B cell (primary cell): ENCODE measurements at regions of chr5 and their contacts with region 1.

Region 1: GRCh38 chr5:134904630-134905245 is at the start of gene PCBD2:
- DNase-seq: peak; percentile 95
- ATAC-seq: peak; percentile 75
- H3K4me3 ChIP-seq: peak within 1 kb of the TSS; percentile 70 to 88 (median 82)
- H3K4me3 Mint-ChIP-seq: peak within 1 kb of the TSS; percentile 91
- H3K27ac ChIP-seq: peak within 1 kb of the TSS; percentile 80 to 96
- H3K27ac Mint-ChIP-seq: peak within 1 kb of the TSS; percentile 99
- H3K4me1 ChIP-seq: peaks cover 32 to 42% of the 10 kb centered on the region in 2 donors
- H3K4me1 Mint-ChIP-seq: peaks cover 35% of the 10 kb centered on the region
- H3K27me3 ChIP-seq: no peaks in the 10 kb centered on the region
- H3K27me3 Mint-ChIP-seq: no peaks in the 10 kb centered on the region
- CTCF ChIP-seq: peak; percentile 90
- total RNA-seq, gene PCBD2: 15.7 and 20.9 TPM in 2 replicates

Region 2: DNA sequence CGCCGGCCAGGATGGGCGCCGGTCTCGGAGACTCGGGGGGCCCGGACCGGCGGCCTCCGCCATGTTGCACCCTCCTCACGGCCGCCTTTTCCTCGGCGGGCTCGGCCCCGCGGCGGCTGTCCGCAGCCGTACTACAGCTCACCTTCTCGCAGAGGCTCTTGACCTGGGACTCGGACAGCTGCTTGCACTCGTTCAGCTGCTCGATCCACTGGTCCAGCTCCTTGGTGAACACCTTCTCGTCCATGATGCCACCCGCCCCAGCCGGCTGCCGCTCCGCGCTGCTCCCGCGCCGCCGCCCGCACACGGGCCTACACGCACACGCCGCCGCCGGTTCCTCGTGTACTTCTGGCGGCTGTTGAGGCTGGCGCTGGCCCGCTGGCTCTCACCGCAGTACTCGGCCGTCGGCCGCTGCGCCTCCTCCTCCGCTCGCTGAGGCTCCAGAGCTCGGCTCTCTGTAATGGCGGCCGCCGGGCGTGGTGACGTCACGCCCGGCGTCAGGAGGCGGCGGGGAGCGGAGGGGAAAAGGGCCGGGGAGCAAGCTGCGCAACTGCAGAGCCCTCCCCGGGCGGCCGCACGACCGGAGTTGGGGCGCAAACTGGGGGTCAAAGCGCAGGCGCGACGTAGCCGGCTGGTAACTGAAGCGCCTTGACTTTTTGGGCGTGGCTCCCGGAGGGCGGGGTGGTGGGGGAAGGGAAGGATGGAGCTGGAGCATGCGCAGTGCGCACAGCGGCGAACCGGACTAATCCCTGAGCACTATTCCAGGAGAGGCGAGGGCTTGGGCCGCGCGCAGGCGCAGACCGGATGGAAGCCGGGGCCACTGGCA is 678.9 kb before region 1 on chr5 and contains the start of gene PPP2CA:
- CTCF ChIA-PET with region 1: interaction called, 3 read pairs
- POLR2A ChIA-PET with region 1: interaction called, 8 read pairs
- intact Hi-C with region 1: loop called (anchors 1 kb)
- DNase-seq: peak; percentile 100
- ATAC-seq: peak; percentile 77
- H3K4me3 ChIP-seq: peak within 1 kb of the TSS; percentile 87 to 100 (median 98)
- H3K4me3 Mint-ChIP-seq: peak within 1 kb of the TSS; percentile 94
- H3K27ac ChIP-seq: peak within 1 kb of the TSS; percentile 95 to 100
- H3K27ac Mint-ChIP-seq: peak within 1 kb of the TSS; percentile 99
- H3K4me1 ChIP-seq: peaks cover 36% of the 10 kb centered on the region in 2 donors
- H3K4me1 Mint-ChIP-seq: peaks cover 51% of the 10 kb centered on the region
- H3K27me3 ChIP-seq: no peaks in the 10 kb centered on the region
- H3K27me3 Mint-ChIP-seq: no peaks in the 10 kb centered on the region
- CTCF ChIP-seq: peak; percentile 27
- total RNA-seq, gene PPP2CA: 86.2 and 100 TPM in 2 replicates

Region 3: DNA sequence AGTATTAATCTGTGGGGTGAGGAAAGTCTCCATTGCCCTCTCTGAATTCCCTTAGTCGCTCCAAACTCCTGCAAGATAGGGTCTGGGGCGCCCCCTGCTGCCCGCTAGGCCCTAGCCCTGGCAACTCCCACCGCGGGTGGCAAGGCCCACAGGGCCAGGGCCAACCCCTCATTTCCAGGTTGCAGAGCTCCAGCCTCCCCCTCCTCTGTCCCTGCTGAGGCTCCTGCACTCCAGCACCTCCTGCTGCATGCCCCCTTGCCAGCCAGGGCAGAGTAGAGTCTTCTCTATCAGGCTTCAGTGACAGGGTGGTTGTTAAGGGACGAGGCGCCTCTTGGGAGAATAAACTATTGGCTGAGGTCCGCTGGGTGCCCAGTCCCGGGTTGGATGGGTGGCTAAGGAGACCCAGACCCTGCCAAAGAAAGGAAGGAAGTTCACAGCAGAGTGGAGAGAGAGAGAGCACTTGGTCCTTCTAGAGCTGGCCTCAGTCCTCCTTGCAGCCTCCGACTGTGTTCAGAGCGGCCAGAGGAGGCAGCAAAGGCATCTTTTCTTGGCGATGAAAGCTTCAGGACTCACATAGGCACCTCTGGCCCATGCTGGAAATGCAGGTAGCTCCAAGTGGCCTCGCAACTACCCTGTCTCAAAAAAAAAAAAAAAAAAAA is 317.7 kb before region 1 on chr5:
- CTCF ChIA-PET with region 1: interaction called, 3 read pairs
- POLR2A ChIA-PET with region 1: no interaction called
- intact Hi-C with region 1: loop called (anchors 1 kb)
- DNase-seq: peak; percentile 82
- ATAC-seq: peak; percentile 89
- H3K4me3 ChIP-seq: peak overlapping the region in 1 of 5 experiments; percentile 33
- H3K4me3 Mint-ChIP-seq: peak overlapping the region; percentile 49
- H3K27ac ChIP-seq: no peak overlapping the region
- H3K27ac Mint-ChIP-seq: no peak overlapping the region
- H3K4me1 ChIP-seq: peaks cover 3 to 5% of the 10 kb centered on the region in 2 donors
- H3K4me1 Mint-ChIP-seq: peaks cover 21% of the 10 kb centered on the region
- H3K27me3 ChIP-seq: no peaks in the 10 kb centered on the region
- H3K27me3 Mint-ChIP-seq: no peaks in the 10 kb centered on the region
- CTCF ChIP-seq: peak; percentile 86

Region 4: GRCh38 chr5:134738133-134738962 is 166.4 kb before region 1 on chr5 and contains the start of gene CAMLG:
- CTCF ChIA-PET with region 1: interaction called, 93 read pairs
- POLR2A ChIA-PET with region 1: interaction called, 30 read pairs
- intact Hi-C with region 1: loop called (anchors 1 kb)
- DNase-seq: peak; percentile 98
- ATAC-seq: peak; percentile 97
- H3K4me3 ChIP-seq: peak within 1 kb of the TSS; percentile 69 to 94 (median 89)
- H3K4me3 Mint-ChIP-seq: peak within 1 kb of the TSS; percentile 90
- H3K27ac ChIP-seq: peak within 1 kb of the TSS; percentile 77 to 89
- H3K27ac Mint-ChIP-seq: peak within 1 kb of the TSS; percentile 89
- H3K4me1 ChIP-seq: peaks cover 24 to 42% of the 10 kb centered on the region in 2 donors
- H3K4me1 Mint-ChIP-seq: peaks cover 33% of the 10 kb centered on the region
- H3K27me3 ChIP-seq: no peaks in the 10 kb centered on the region
- H3K27me3 Mint-ChIP-seq: no peaks in the 10 kb centered on the region
- CTCF ChIP-seq: peak; percentile 77
- total RNA-seq, gene CAMLG: 27.5 and 29.7 TPM in 2 replicates

Region 5: DNA sequence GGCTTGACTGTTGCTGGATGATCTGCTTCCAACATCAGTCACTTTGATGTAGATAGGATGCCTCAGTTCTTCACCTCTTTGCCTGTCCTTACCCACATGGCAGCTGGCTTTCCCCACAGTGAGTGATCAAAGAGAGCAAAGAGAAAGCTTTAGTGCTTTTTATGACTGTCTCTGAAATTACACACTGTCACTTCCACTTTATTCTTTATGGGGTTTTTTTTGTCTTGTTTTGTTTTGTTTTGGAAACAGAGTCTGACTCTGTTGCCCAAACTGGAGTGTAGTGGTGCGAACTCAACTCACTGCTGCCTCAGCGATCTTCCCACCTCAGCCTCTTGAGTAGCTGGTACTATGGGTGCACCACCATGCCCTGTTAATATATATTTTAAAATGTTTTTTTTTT is 91.3 kb before region 1 on chr5:
- CTCF ChIA-PET with region 1: no interaction called
- POLR2A ChIA-PET with region 1: no interaction called
- intact Hi-C with region 1: loop called (anchors 1 kb)
- DNase-seq: peak; percentile 37
- ATAC-seq: peak; percentile 67
- H3K4me3 ChIP-seq: peak overlapping the region in 1 of 5 experiments; percentile 1
- H3K4me3 Mint-ChIP-seq: peak overlapping the region; percentile 54
- H3K27ac ChIP-seq: peak overlapping the region; percentile 32 to 74
- H3K27ac Mint-ChIP-seq: peak overlapping the region; percentile 53
- H3K4me1 ChIP-seq: peaks cover 10 to 16% of the 10 kb centered on the region in 2 donors
- H3K4me1 Mint-ChIP-seq: peaks cover 14% of the 10 kb centered on the region
- H3K27me3 ChIP-seq: no peaks in the 10 kb centered on the region
- H3K27me3 Mint-ChIP-seq: no peaks in the 10 kb centered on the region
- CTCF ChIP-seq: no peak

Region 6: DNA sequence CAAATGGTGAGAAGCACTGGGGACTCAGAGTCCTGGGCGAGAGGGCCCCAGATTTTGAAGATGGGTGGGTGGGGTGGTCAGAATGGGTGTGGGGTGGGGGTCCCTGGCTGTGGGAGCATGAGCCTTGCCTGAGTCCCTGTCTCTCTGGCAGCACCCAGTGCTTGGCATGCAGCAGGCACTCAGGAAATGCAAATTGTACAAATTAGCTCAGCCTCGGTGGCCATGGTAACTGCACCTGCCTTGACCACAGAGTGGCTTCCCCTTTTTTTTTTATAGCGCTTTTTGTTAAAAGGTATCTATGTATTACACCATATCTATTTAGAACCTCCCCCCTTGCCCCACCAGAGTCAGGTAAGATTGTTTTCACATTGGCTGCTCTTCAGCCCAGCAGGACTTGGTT is 148.5 kb after region 1 on chr5:
- CTCF ChIA-PET with region 1: interaction called, 3 read pairs
- POLR2A ChIA-PET with region 1: interaction called, 4 read pairs
- intact Hi-C with region 1: loop called (anchors 5 kb)
- DNase-seq: peak; percentile 92
- ATAC-seq: peak; percentile 89
- H3K4me3 ChIP-seq: peak overlapping the region in 3 of 5 experiments; percentile 9 to 48 (median 27)
- H3K4me3 Mint-ChIP-seq: peak overlapping the region; percentile 85
- H3K27ac ChIP-seq: peak overlapping the region; percentile 29 to 50
- H3K27ac Mint-ChIP-seq: peak overlapping the region; percentile 74
- H3K4me1 ChIP-seq: peaks cover 48 to 55% of the 10 kb centered on the region in 2 donors
- H3K4me1 Mint-ChIP-seq: peaks cover 57% of the 10 kb centered on the region
- H3K27me3 ChIP-seq: peaks cover 0 to 53% (median 29%) of the 10 kb centered on the region in 4 experiments
- H3K27me3 Mint-ChIP-seq: peaks cover 53% of the 10 kb centered on the region
- CTCF ChIP-seq: no peak